Naive thymus-derived CD4-positive, alpha-beta T cell (primary cell): ENCODE measurements at regions of chr16 and their contacts with region 1.

Region 1: GRCh38 chr16:11619327-11619851 is 32.7 kb upstream of the LITAF start:
- DNase-seq: peak in 5 of 9 donors; percentile 39 to 54 (median 52)
- ATAC-seq: peak; percentile 75
- H3K4me3 ChIP-seq: peak overlapping the region; percentile 47
- H3K4me3 Mint-ChIP-seq: peak overlapping the region; percentile 68 to 95 (median 76)
- H3K27ac ChIP-seq: peak overlapping the region; percentile 77
- H3K27ac Mint-ChIP-seq: peak overlapping the region; percentile 76 to 100 (median 98)
- H3K4me1 ChIP-seq: peaks cover 52 to 71% of the 10 kb centered on the region in 2 donors
- H3K4me1 Mint-ChIP-seq: peaks cover 52 to 92% (median 60%) of the 10 kb centered on the region in 7 donors
- H3K27me3 ChIP-seq: no peaks in the 10 kb centered on the region
- H3K27me3 Mint-ChIP-seq: no peaks in the 10 kb centered on the region

Region 2: GRCh38 chr16:11356573-11357331 is 262.6 kb before region 1 on chr16:
- CTCF ChIA-PET with region 1: no interaction called
- POLR2A ChIA-PET with region 1: no interaction called
- intact Hi-C with region 1: no loop called
- DNase-seq: peak in 8 of 9 donors; percentile 17 to 55 (median 36)
- ATAC-seq: peak; percentile 47
- H3K4me3 ChIP-seq: no peak overlapping the region
- H3K4me3 Mint-ChIP-seq: peak overlapping the region in 5 of 10 donors; percentile 9 to 86 (median 31)
- H3K27ac ChIP-seq: no peak overlapping the region
- H3K27ac Mint-ChIP-seq: peak overlapping the region in 8 of 9 donors; percentile 22 to 99 (median 45)
- H3K4me1 ChIP-seq: peaks cover 33 to 51% of the 10 kb centered on the region in 2 donors
- H3K4me1 Mint-ChIP-seq: peaks cover 37 to 80% (median 68%) of the 10 kb centered on the region in 7 donors
- H3K27me3 ChIP-seq: no peaks in the 10 kb centered on the region
- H3K27me3 Mint-ChIP-seq: peaks cover 0 to 25% (median 4%) of the 10 kb centered on the region in 5 donors

Region 3: GRCh38 chr16:11632464-11632939 is 13.1 kb after region 1 on chr16:
- CTCF ChIA-PET with region 1: interaction called, 8 read pairs
- POLR2A ChIA-PET with region 1: interaction called, 16 read pairs
- intact Hi-C with region 1: no loop called
- DNase-seq: no peak
- ATAC-seq: no peak
- H3K4me3 ChIP-seq: no peak overlapping the region
- H3K4me3 Mint-ChIP-seq: no peak overlapping the region
- H3K27ac ChIP-seq: no peak overlapping the region
- H3K27ac Mint-ChIP-seq: no peak overlapping the region
- H3K4me1 ChIP-seq: peaks cover 0 to 17% of the 10 kb centered on the region in 2 donors
- H3K4me1 Mint-ChIP-seq: peaks cover 24 to 53% (median 45%) of the 10 kb centered on the region in 7 donors
- H3K27me3 ChIP-seq: no peaks in the 10 kb centered on the region
- H3K27me3 Mint-ChIP-seq: peaks cover 0 to 19% (median 0%) of the 10 kb centered on the region in 5 donors